MCF 10A (cell line): ENCODE measurements at regions of chr18 and their contacts with region 1.

Region 1: DNA sequence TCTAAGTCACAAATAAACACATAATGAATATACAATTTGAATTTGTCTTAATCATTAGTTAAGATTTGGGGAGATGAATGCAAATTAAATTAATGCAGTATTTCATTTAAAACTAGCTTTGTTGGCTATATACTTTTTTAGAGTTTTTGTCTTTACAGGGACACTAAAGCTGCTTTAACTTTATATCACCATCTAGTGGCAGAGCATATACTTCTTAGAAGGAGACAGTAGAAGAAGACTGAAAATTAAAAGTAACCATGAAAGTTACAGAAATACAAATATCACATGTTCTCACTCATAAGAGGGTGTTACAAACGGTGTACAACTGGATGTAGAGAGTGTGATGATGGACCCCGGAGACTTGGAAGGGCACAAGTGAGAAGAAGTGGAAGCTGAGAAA is 268.3 kb upstream of the NETO1 start:
- DNase-seq: peak; percentile 29
- H3K4me3 Mint-ChIP-seq: no peak overlapping the region
- H3K27ac Mint-ChIP-seq: no peak overlapping the region
- H3K4me1 Mint-ChIP-seq: peaks cover 5% of the 10 kb centered on the region
- H3K27me3 Mint-ChIP-seq: no peaks in the 10 kb centered on the region
- CTCF ChIP-seq: peak; percentile 53

Region 2: DNA sequence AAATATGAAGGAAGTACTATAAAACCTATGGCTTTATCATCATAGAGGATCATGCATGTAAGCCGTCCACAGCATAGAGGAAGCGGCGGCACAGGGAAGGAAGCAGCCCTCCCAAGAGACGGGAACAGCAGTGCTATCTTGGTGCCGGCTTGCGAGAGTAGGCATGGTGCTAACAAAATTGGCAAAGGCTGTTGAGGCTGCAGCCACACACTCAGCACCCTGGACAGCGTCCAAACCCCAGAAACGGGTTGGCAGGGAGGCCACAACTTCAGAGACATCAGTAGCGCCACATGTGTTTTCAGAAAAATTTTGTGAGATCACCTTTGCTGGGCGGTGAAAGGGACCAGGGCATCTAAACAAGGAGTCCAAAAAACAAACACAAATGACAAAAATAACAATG is 306.0 kb before region 1 on chr18:
- CTCF ChIA-PET with region 1: no interaction called
- POLR2A ChIA-PET with region 1: no interaction called
- intact Hi-C with region 1: loop called (anchors 5 kb)
- DNase-seq: peak; percentile 73
- H3K4me3 Mint-ChIP-seq: no peak overlapping the region
- H3K27ac Mint-ChIP-seq: no peak overlapping the region
- H3K4me1 Mint-ChIP-seq: peaks cover 22% of the 10 kb centered on the region
- H3K27me3 Mint-ChIP-seq: no peaks in the 10 kb centered on the region
- CTCF ChIP-seq: no peak

Region 3: DNA sequence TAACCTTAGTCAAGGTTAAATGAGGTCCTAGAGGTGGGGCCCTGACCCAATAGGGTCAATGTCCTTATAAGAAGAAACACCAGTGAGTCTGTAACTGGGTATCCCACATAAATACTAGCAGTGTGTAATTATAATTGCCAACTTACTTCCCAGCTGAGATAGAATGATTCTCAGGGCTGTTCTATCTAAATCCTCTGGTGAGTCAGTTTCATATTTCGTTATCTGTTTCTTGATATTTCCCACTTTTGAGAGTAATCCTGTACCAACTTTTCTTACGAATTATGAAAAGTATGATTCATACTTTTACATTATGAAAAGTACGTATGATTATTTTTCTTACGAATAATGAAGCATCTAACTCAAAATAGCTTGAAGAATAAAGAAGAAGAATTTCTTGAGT is 278.5 kb after region 1 on chr18:
- CTCF ChIA-PET with region 1: no interaction called
- POLR2A ChIA-PET with region 1: no interaction called
- intact Hi-C with region 1: no loop called
- DNase-seq: peak; percentile 1
- H3K4me3 Mint-ChIP-seq: no peak overlapping the region
- H3K27ac Mint-ChIP-seq: no peak overlapping the region
- H3K4me1 Mint-ChIP-seq: no peaks in the 10 kb centered on the region
- H3K27me3 Mint-ChIP-seq: no peaks in the 10 kb centered on the region
- CTCF ChIP-seq: no peak

Region 4: DNA sequence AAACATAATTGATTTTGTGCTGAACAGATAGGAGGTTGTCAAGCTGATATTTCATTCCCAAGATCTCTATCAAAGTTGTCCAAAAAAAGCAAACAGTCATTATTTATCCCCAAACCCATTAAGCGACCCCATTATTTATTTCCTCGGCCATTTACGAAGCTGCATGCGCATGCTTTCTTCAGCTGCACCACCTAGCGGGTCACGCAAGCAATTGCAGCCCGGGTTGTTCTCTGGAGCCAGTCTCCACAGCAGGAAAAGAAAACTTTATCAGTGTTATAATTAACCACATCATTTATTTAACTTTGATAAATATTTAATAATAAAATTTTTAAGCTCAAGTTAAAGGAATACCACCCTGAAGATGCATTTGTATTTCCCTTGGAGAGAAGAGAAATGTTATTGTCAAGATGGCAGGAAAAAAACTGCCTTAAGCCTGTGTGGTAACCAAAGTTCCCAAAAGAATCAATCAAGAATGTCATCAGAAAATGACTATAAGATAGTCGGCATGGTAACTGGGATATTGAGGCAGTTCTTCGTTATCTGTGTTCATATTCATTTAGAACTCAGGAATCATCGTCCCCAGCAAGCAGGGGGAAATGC is 706.8 kb after region 1 on chr18:
- CTCF ChIA-PET with region 1: interaction called, 13 read pairs
- POLR2A ChIA-PET with region 1: no interaction called
- intact Hi-C with region 1: loop called (anchors 2 kb)
- DNase-seq: peak; percentile 55
- H3K4me3 Mint-ChIP-seq: no peak overlapping the region
- H3K27ac Mint-ChIP-seq: peak overlapping the region; percentile 8
- H3K4me1 Mint-ChIP-seq: peaks cover 5% of the 10 kb centered on the region
- H3K27me3 Mint-ChIP-seq: no peaks in the 10 kb centered on the region
- CTCF ChIP-seq: peak; percentile 89

Region 5: GRCh38 chr18:74420481-74420880 is 1284.3 kb after region 1 on chr18:
- CTCF ChIA-PET with region 1: no interaction called
- POLR2A ChIA-PET with region 1: no interaction called
- intact Hi-C with region 1: no loop called
- DNase-seq: no peak
- H3K4me3 Mint-ChIP-seq: no peak overlapping the region
- H3K27ac Mint-ChIP-seq: no peak overlapping the region
- H3K4me1 Mint-ChIP-seq: no peaks in the 10 kb centered on the region
- H3K27me3 Mint-ChIP-seq: peaks cover 62% of the 10 kb centered on the region
- CTCF ChIP-seq: no peak